Mucosa of descending colon (tissue), 3 donors: ENCODE measurements at regions of chr5 and their contacts with region 1.

Region 1: GRCh38 chr5:137778772-137779564 is 24.8 kb upstream of the HNRNPA0 start:
- DNase-seq: no peak
- ATAC-seq: no peak
- H3K4me3 ChIP-seq: no peak overlapping the region
- H3K4me1 ChIP-seq: no peaks in the 10 kb centered on the region
- CTCF ChIP-seq: no peak

Region 2: DNA sequence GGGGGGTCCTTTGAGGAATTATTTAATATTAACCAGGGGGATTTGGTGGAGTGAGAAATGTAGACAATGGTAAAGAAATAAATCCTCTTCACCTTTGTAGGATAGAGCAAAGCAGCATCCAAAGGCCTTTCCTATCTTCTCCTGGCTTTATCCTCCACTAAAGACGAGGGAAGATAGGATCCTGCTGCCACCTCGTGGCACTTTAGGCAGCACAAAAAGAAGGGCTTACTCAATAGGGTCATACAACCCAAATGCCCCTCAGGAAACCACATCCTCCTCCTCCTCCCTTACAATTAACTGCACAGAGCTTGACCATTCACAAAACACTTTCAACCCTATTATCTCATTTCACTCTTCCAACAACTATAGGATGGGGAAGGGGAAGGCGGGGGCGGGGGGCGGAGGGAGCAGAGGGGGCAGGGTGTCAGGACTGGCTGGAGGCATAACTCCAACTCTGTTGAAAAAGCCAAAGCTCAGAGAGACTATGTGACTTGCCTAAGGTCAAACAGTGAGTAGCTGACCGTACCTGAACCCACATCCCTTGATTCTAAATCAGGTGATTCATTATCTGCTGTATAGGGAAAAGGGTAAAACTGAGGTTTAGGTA is 43.3 kb after region 1 on chr5:
- intact Hi-C with region 1: loop called in 1 of 2 experiments (anchors 5 kb)
- DNase-seq: peak in 2 of 3 donors; percentile 63 to 68
- ATAC-seq: peak; percentile 54
- H3K4me3 ChIP-seq: no peak overlapping the region
- H3K4me1 ChIP-seq: no peaks in the 10 kb centered on the region
- CTCF ChIP-seq: no peak

Region 3: GRCh38 chr5:138809391-138809790 is 1030.4 kb after region 1 on chr5:
- intact Hi-C with region 1: no loop called
- DNase-seq: no peak
- ATAC-seq: no peak
- H3K4me3 ChIP-seq: no peak overlapping the region
- H3K4me1 ChIP-seq: no peaks in the 10 kb centered on the region
- CTCF ChIP-seq: no peak